ENCODE measurements at regions of chr9 and their contacts with region 1.

Region 1: GRCh38 chr9:123445981-123446610 is 90.1 kb downstream of the CRB2 start:
- DNase-seq: peak in 1 of 7 donors; percentile 35
- H3K4me3 ChIP-seq: no peak overlapping the region
- H3K27ac ChIP-seq: no peak overlapping the region
- H3K4me1 ChIP-seq: no peaks in the 10 kb centered on the region
- H3K27me3 ChIP-seq: no peaks in the 10 kb centered on the region
- CTCF ChIP-seq: no peak
- POLR2A ChIP-seq: no peak

Region 2: DNA sequence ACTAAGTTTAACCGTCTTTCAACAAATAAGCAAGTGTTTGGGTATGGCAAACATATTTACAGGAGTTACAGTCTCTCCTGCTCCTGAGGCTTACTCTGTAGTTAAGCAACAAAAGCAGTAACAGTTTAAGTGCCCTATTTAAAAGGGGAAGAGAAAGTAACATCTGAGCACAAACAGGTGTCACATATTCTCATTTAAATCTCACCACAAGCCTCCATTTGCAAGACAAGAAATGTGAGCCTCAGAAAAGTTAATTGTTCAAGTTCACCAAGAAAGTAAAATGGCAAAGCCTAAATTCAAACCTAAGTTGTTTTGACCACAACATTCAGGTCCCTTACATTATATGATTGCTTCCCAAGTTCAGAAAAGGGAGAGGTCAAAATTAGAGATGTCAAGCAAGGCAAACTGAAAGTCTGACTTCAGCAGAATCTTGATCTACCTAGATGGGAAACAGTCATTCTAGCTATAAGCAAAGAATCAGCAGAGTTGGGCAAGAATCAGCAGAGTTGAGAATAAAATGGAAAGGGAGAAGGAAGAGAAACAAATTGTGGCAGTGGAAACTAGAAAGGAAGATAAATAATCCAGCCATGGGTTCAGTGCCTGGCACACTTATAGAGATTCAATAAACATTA is 271.1 kb before region 1 on chr9:
- intact Hi-C with region 1: loop called in 1 of 2 experiments (anchors 10 kb)
- DNase-seq: no peak
- H3K4me3 ChIP-seq: no peak overlapping the region
- H3K27ac ChIP-seq: no peak overlapping the region
- H3K4me1 ChIP-seq: no peaks in the 10 kb centered on the region
- H3K27me3 ChIP-seq: no peaks in the 10 kb centered on the region
- CTCF ChIP-seq: no peak
- POLR2A ChIP-seq: no peak

Measured in adrenal gland (tissue), 19 donors.